ENCODE measurements at regions of chr18 and their contacts with region 1.

Region 1: DNA sequence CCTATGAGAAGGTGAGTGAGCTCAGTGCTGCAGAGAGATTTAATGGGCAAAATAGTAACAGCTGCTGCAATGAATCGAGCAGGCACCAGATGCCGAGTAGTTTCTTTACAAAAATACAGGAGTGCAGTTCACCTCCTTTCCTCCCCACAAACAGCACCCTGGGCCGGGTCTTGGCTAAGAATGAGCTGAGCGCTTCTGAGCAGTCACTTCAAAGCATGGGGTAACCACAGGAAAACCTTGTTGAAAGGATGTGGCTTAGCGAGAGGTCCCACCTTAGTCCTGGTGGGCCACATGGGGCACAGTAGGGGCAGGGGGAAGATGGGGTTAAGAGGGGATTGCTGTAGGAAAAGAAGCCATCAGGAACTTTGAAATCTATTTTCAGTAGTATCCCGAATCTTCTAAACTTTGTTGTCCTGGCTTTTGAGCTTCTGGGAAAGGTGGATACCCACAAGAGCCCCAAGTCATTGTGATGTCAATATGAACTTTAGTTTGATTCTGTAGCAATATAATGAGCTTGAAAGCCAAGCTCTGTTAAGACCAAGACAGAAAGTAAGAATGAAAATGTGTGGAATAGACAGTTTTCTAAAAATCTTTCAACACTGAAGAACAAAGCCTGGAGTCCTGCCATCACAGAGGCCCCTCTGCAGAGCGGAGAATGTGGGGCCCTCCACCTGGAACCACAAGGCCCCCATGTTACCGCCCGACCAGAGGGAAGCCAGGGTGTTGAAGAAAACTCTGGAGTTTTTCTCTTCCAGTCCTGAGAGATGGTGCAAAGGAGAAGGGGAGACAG is 101.0 kb upstream of the ZNF236 start:
- DNase-seq: peak; percentile 83
- H3K4me3 Mint-ChIP-seq: peak overlapping the region; percentile 53
- H3K27ac Mint-ChIP-seq: peak overlapping the region; percentile 83
- H3K4me1 Mint-ChIP-seq: peaks cover 42% of the 10 kb centered on the region
- H3K27me3 Mint-ChIP-seq: peaks cover 3% of the 10 kb centered on the region

Region 2: GRCh38 chr18:76604935-76605240 is 116.5 kb before region 1 on chr18:
- intact Hi-C with region 1: no loop called
- DNase-seq: no peak
- H3K4me3 Mint-ChIP-seq: no peak overlapping the region
- H3K27ac Mint-ChIP-seq: no peak overlapping the region
- H3K4me1 Mint-ChIP-seq: no peaks in the 10 kb centered on the region
- H3K27me3 Mint-ChIP-seq: no peaks in the 10 kb centered on the region

Region 3: DNA sequence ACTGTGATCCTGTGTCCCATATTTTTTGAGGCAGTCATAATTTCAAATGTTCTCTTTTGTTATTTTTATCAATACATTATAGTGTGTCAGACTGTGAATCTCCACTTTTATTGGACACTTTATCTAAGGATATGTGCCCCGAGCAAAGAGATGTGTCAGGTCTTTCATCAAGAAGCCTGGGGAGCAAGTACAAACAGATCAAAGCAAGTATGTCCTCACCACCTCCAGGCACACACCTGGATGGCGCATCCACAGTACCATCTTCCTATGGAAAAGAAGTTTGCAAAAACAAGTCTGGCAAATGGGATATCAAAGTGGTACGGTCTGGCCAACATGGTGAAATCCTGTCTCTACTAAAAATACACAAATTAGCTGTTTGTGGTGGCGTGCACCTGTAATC is 20.0 kb after region 1 on chr18:
- intact Hi-C with region 1: loop called (anchors 2 kb)
- DNase-seq: no peak
- H3K4me3 Mint-ChIP-seq: no peak overlapping the region
- H3K27ac Mint-ChIP-seq: no peak overlapping the region
- H3K4me1 Mint-ChIP-seq: peaks cover 12% of the 10 kb centered on the region
- H3K27me3 Mint-ChIP-seq: peaks cover 37% of the 10 kb centered on the region

Measured in activated T-helper 2 cell treated with anti-CD3 and anti-CD28 coated beads, Interferon-gamma antibody, Interleukin-2, Interleukin-4, amounts not matched to agents 10 μg/mL and 5 μg/mL and 100 μg/mL, durations not matched to agents 14 hours and 24 hours and 36 hours (primary cell).